PC-3 (cell line): ENCODE measurements at regions of chr6 and their contacts with region 1.

Region 1: GRCh38 chr6:151414641-151415260 is 23.4 kb upstream of the ZBTB2 start:
- DNase-seq: no peak
- ATAC-seq: no peak
- H3K4me3 ChIP-seq: no peak overlapping the region
- H3K27ac ChIP-seq: no peak overlapping the region
- H3K4me1 ChIP-seq: no peaks in the 10 kb centered on the region
- H3K27me3 ChIP-seq: no peaks in the 10 kb centered on the region
- CTCF ChIP-seq: no peak

Region 2: GRCh38 chr6:151254451-151255081 is 160.2 kb before region 1 on chr6:
- CTCF ChIA-PET with region 1: no interaction called
- POLR2A ChIA-PET with region 1: no interaction called
- intact Hi-C with region 1: loop called (anchors 5 kb)
- DNase-seq: peak; percentile 48
- ATAC-seq: peak; percentile 27; the same call in 1 of the 2 replicates
- H3K4me3 ChIP-seq: no peak overlapping the region
- H3K27ac ChIP-seq: no peak overlapping the region
- H3K4me1 ChIP-seq: no peaks in the 10 kb centered on the region; the same call in none of the 2 replicates
- H3K27me3 ChIP-seq: no peaks in the 10 kb centered on the region
- CTCF ChIP-seq: no peak